Activated naive CD4-positive, alpha-beta T cell treated with anti-CD3 and anti-CD28 coated beads, Interleukin-2, amount 10 ng/mL, durations not matched to agents 7 days and 5 days (primary cell): ENCODE measurements at regions of chr3 and their contacts with region 1.

Region 1: DNA sequence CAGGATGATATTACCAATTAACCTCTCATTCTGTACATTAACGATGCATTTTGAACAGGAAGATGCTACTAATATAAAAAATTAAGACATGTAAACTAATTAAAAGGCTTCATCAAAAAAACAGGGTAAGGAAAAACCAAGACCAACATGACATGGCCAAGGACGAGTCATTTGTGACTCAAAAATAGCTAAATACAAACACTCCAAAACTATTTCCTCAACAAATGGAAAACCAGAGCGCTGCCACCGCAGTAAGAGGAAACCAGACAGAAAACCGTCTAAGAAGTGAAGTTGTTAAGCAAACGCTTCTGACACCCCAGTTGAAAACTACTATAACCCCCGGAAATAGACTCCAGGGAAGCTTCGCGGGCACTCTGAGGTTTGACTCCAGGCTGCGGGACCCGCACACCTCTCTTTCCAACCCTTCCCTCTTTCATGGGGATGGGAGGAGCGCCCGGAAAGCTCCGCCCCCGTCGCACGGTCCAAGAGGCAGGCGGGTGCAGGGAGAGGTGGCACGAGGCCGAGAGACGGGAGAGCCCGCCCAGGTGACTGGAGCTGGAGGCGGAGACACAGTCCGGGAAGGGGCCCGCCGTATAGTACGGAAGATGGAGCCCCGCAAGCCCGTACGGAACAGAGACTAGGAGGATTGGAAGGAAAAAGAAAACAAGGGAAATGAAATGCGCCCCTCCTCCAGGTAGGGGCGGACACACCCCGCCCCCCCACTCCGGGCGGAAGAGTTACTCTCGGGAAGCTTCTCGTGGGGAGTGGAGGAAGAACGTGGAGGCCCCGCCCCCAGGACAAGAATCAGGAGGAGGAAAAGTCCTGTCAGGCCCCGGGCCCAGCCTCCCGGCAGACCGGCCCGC is 708 bp downstream of the DCAF1 start:
- DNase-seq: peak; percentile 92
- H3K4me3 Mint-ChIP-seq: peak overlapping the region; percentile 79
- H3K27ac Mint-ChIP-seq: peak overlapping the region; percentile 92
- H3K4me1 Mint-ChIP-seq: peaks cover 31% of the 10 kb centered on the region
- H3K27me3 Mint-ChIP-seq: peaks cover 8% of the 10 kb centered on the region

Region 2: DNA sequence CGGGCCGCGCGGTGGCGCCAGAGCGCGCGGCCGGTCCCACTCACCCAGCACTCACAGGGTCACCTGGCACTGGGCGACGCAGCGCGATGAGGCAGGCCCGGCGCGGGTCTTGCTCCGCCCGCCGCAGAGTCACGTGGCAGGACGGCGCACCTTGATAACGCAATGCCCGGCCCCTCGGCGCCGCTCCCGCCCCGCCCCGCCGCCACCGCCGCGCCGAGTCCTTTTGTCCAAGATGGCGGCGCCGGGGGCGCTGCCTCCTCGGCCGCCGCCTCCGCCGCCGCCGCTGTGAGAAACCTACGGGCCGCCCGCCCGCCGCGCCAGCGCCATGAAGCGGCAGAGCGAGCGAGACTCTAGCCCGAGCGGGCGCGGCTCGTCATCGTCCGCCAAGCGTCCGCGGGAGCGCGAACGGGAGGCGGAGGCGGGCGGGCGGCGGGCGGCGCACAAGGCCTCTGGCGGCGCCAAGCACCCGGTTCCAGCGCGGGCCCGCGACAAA is 108.0 kb before region 1 on chr3 and contains the start of gene RBM15B:
- CTCF ChIA-PET with region 1: interaction called, 32 read pairs
- DNase-seq: peak; percentile 98
- H3K4me3 Mint-ChIP-seq: peak within 1 kb of the TSS; percentile 82
- H3K27ac Mint-ChIP-seq: peak within 1 kb of the TSS; percentile 93
- H3K4me1 Mint-ChIP-seq: peaks cover 78% of the 10 kb centered on the region
- H3K27me3 Mint-ChIP-seq: no peaks in the 10 kb centered on the region

Region 3: GRCh38 chr3:51519848-51520247 is 20.7 kb after region 1 on chr3:
- CTCF ChIA-PET with region 1: interaction called, 13 read pairs
- DNase-seq: no peak
- H3K4me3 Mint-ChIP-seq: no peak overlapping the region
- H3K27ac Mint-ChIP-seq: no peak overlapping the region
- H3K4me1 Mint-ChIP-seq: peaks cover 4% of the 10 kb centered on the region
- H3K27me3 Mint-ChIP-seq: peaks cover 12% of the 10 kb centered on the region

Region 4: GRCh38 chr3:51670823-51671733 is 172.0 kb after region 1 on chr3 and contains the start of gene TEX264:
- CTCF ChIA-PET with region 1: interaction called, 156 read pairs
- DNase-seq: peak; percentile 95
- H3K4me3 Mint-ChIP-seq: peak within 1 kb of the TSS; percentile 84
- H3K27ac Mint-ChIP-seq: peak within 1 kb of the TSS; percentile 90
- H3K4me1 Mint-ChIP-seq: peaks cover 76% of the 10 kb centered on the region
- H3K27me3 Mint-ChIP-seq: no peaks in the 10 kb centered on the region

Region 5: DNA sequence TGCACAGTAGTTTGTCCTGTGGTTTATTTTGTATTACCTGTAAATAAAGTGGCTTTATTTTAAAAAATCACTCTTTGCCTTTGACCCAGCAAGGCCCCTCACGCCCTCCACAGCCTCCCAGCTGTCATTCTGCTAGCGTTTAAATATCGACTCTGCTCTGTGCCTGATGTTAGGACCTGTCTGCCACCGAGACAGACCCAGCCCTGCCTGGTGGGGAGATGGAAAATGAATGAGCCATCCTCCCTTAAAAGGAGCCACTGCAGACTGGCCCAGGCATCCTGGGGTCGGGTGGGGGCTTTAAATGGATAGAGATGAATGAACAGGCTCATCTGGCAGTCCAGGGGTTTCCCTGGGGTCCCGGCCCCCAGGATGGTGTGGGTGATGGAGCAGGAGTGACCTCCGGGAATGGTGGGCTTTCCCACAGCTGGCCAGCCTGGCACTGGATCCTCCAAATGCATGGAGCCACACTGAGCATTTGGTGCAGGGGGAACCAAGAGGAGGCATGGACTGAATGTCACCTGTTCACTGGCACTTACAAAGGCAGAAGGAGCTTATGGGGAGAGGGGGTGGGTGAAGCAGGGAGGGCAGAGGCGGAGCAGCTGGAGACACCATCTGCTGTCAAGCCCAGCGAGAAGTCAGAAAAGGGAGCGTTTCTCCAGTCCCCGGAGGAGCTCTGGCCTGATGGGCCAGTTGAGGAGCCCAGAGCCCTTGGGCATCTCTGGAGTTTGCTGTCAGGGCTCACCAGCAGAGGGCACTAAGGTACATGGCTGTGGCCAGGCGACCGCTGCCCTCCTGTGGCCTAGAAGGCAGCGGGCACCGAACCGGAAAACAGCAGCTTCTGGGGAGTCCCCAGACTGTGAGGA is 219.7 kb after region 1 on chr3:
- CTCF ChIA-PET with region 1: interaction called, 18 read pairs
- DNase-seq: peak; percentile 85
- H3K4me3 Mint-ChIP-seq: no peak overlapping the region
- H3K27ac Mint-ChIP-seq: peak overlapping the region; percentile 26
- H3K4me1 Mint-ChIP-seq: peaks cover 36% of the 10 kb centered on the region
- H3K27me3 Mint-ChIP-seq: no peaks in the 10 kb centered on the region